ENCODE measurements at regions of chr17 and their contacts with region 1.

Region 1: DNA sequence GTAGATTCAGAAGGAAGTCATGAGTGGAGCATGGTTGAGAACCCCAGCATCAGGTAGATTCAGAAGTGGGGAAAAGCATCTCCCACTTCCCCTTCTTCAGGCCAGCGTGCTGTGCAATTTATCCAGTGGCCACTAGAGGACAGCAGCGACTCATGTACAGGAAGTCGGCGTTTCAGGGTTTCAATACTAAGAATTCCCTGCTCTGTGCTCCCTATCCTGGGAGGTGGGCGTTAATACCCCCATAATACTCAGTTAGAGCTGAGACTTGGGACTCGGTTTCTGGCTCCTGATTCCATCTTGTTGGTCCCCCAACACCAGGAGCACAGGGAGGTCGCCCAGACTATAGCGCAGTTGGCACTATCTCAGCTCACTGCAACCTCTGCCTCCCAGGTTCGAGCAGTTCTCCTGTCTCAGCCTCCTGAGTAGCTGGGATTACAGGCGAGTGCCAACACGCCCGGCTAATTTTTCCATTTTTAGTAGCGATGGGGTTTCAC is 75.3 kb upstream of the AMZ2 start:
- DNase-seq: peak; percentile 53 to 73 (median 68)
- H3K4me3 ChIP-seq: no peak overlapping the region
- H3K4me3 Mint-ChIP-seq: no peak overlapping the region
- H3K27ac ChIP-seq: no peak overlapping the region
- H3K27ac Mint-ChIP-seq: no peak overlapping the region
- H3K4me1 ChIP-seq: peaks cover 0 to 4% of the 10 kb centered on the region in 2 donors
- H3K4me1 Mint-ChIP-seq: peaks cover 4% of the 10 kb centered on the region
- H3K27me3 ChIP-seq: no peaks in the 10 kb centered on the region
- H3K27me3 Mint-ChIP-seq: peaks cover 0 to 4% (median 2%) of the 10 kb centered on the region in 3 donors
- CTCF ChIP-seq: peak; percentile 99

Region 2: GRCh38 chr17:68143425-68143824 is 29.1 kb before region 1 on chr17:
- intact Hi-C with region 1: no loop called
- DNase-seq: no peak
- H3K4me3 ChIP-seq: no peak overlapping the region
- H3K4me3 Mint-ChIP-seq: no peak overlapping the region
- H3K27ac ChIP-seq: no peak overlapping the region
- H3K27ac Mint-ChIP-seq: no peak overlapping the region
- H3K4me1 ChIP-seq: no peaks in the 10 kb centered on the region
- H3K4me1 Mint-ChIP-seq: no peaks in the 10 kb centered on the region
- H3K27me3 ChIP-seq: no peaks in the 10 kb centered on the region
- H3K27me3 Mint-ChIP-seq: peaks cover 0 to 3% (median 0%) of the 10 kb centered on the region in 3 donors
- CTCF ChIP-seq: no peak

Region 3: GRCh38 chr17:68463211-68464019 is 290.9 kb after region 1 on chr17:
- intact Hi-C with region 1: loop called (anchors 2 to 5 kb)
- DNase-seq: no peak
- H3K4me3 ChIP-seq: no peak overlapping the region
- H3K4me3 Mint-ChIP-seq: no peak overlapping the region
- H3K27ac ChIP-seq: no peak overlapping the region
- H3K27ac Mint-ChIP-seq: peak overlapping the region in 1 of 7 donors; percentile 10
- H3K4me1 ChIP-seq: peaks cover 12 to 15% of the 10 kb centered on the region in 2 donors
- H3K4me1 Mint-ChIP-seq: peaks cover 27% of the 10 kb centered on the region
- H3K27me3 ChIP-seq: peaks cover 0 to 5% of the 10 kb centered on the region in 2 donors
- H3K27me3 Mint-ChIP-seq: peaks cover 2% of the 10 kb centered on the region in 3 donors
- CTCF ChIP-seq: peak; percentile 47